GM12878 (cell line): ENCODE measurements at regions of chr4 and their contacts with region 1.

Region 1: GRCh38 chr4:112099701-112100297 is 45.5 kb upstream of the FAM241A start:
- DNase-seq: peak; percentile 27
- ATAC-seq: peak; percentile 93
- H3K4me3 ChIP-seq: no peak overlapping the region
- H3K27ac ChIP-seq: no peak overlapping the region
- H3K4me1 ChIP-seq: no peaks in the 10 kb centered on the region
- H3K27me3 ChIP-seq: no peaks in the 10 kb centered on the region
- CTCF ChIP-seq: peak; percentile 35 to 66 (median 50); a peak in 5 of 6 replicates
- EP300 ChIP-seq: no peak
- POLR2A ChIP-seq: no peak
- RAD21 ChIP-seq: peak; percentile 75

Region 2: GRCh38 chr4:112082954-112083586 is 16.7 kb before region 1 on chr4:
- CTCF ChIA-PET with region 1: interaction called, 6 read pairs
- POLR2A ChIA-PET with region 1: no interaction called
- RAD21 ChIA-PET with region 1: no interaction called
- SMC1A ChIA-PET with region 1: interaction called, 10 read pairs
- in situ Hi-C with region 1: no loop called
- intact Hi-C with region 1: no loop called
- DNase-seq: no peak
- ATAC-seq: no peak
- H3K4me3 ChIP-seq: no peak overlapping the region
- H3K27ac ChIP-seq: no peak overlapping the region
- H3K4me1 ChIP-seq: 0 out of 2 replicates have a peak, but pooled peaks cover 4% of the 10 kb centered on the region
- H3K27me3 ChIP-seq: no peaks in the 10 kb centered on the region
- CTCF ChIP-seq: no peak
- EP300 ChIP-seq: no peak
- POLR2A ChIP-seq: no peak
- RAD21 ChIP-seq: no peak

Region 3: DNA sequence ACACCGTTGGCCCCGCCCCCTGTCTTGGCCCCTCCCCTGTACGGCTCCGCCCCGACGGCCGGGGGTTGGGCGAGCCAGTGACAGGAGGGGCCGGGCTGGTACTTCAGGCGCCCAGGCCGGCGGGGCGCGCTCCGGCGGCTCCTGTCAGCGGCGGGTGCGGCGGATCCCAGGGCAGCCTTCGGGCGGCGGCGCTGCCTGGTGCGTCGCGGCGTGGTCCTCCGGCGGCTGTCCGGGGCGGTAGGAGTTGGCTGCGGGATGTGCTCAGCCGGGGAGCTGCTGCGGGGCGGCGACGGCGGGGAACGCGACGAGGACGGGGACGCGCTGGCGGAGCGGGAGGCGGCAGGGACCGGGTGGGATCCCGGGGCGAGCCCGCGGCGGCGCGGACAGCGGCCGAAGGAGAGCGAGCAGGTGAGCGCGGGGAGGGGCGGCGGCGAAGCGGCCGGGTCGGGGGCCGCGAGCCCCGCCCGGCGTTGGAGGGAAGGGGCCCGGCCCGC is 45.6 kb after region 1 on chr4 and contains the start of gene FAM241A:
- CTCF ChIA-PET with region 1: interaction called, 6 read pairs
- POLR2A ChIA-PET with region 1: interaction called, 3 read pairs
- RAD21 ChIA-PET with region 1: interaction called, 3 read pairs
- SMC1A ChIA-PET with region 1: interaction called, 11 read pairs
- in situ Hi-C with region 1: no loop called
- intact Hi-C with region 1: loop called (anchors 5 kb)
- DNase-seq: no peak
- ATAC-seq: peak; percentile 97
- H3K4me3 ChIP-seq: peak within 1 kb of the TSS; percentile 76
- H3K27ac ChIP-seq: no peak within 1 kb of the TSS
- H3K4me1 ChIP-seq: peaks cover 5% of the 10 kb centered on the region; the same call in 1 of the 2 replicates
- H3K27me3 ChIP-seq: peaks cover 0 to 2% of the 10 kb centered on the region in 2 experiments; a peak in 2 of 4 replicates
- CTCF ChIP-seq: no peak
- EP300 ChIP-seq: no peak
- POLR2A ChIP-seq: peak; percentile 93
- RAD21 ChIP-seq: no peak
- polyA plus RNA-seq, gene FAM241A: 0.82 to 1.4 TPM

Region 4: GRCh38 chr4:112245383-112245782 is 145.6 kb after region 1 on chr4:
- CTCF ChIA-PET with region 1: interaction called, 42 read pairs
- POLR2A ChIA-PET with region 1: no interaction called
- RAD21 ChIA-PET with region 1: no interaction called
- SMC1A ChIA-PET with region 1: interaction called, 5 read pairs
- in situ Hi-C with region 1: no loop called
- intact Hi-C with region 1: no loop called
- DNase-seq: no peak
- ATAC-seq: no peak
- H3K4me3 ChIP-seq: no peak overlapping the region
- H3K27ac ChIP-seq: no peak overlapping the region
- H3K4me1 ChIP-seq: no peaks in the 10 kb centered on the region
- H3K27me3 ChIP-seq: no peaks in the 10 kb centered on the region
- CTCF ChIP-seq: no peak
- EP300 ChIP-seq: no peak
- POLR2A ChIP-seq: no peak
- RAD21 ChIP-seq: no peak

Region 5: DNA sequence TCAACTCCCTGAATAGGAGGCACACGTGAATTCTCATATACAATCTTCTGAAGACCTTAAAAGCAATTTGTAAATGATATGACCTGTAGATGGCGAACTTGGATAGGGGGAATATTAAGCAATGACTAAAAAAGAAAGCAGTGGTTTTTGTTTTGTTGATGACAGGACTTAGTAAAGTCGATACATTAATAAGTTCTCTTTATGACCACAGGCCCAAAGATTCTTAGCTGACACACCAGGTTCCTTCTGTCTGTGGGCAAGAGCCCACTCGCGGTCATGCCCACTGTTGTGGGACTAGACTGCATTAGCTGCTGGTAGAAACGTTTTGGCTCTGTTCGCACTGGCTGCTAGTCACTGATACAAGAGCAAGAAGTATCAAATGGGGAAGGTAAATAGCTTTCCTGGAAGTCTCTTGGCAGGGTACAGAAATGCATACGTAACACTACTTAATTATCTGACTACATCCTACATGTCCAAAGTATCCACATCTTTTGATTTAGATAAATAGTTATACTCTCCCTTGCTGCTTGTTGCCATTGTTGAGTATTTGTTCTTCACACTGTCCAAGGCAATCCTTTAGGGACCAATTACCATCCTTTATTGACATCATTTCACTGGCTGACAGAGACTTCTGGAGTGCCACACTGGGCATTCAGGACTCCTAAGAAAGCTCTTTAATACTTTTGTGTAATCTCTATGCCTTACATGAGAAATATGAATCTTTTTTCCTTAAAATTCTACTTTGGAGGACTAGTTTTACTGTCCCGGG is 228.3 kb after region 1 on chr4:
- CTCF ChIA-PET with region 1: interaction called, 43 read pairs
- POLR2A ChIA-PET with region 1: interaction called, 3 read pairs
- RAD21 ChIA-PET with region 1: interaction called, 17 read pairs
- SMC1A ChIA-PET with region 1: interaction called, 17 read pairs
- in situ Hi-C with region 1: loop called (anchors 10 kb)
- intact Hi-C with region 1: loop called (anchors 5 kb)
- DNase-seq: peak; percentile 73
- ATAC-seq: peak; percentile 92
- H3K4me3 ChIP-seq: no peak overlapping the region
- H3K27ac ChIP-seq: no peak overlapping the region
- H3K4me1 ChIP-seq: peaks cover 4% of the 10 kb centered on the region
- H3K27me3 ChIP-seq: no peaks in the 10 kb centered on the region
- CTCF ChIP-seq: peak; percentile 51 to 78 (median 52); a peak in 5 of 6 replicates
- EP300 ChIP-seq: 0 out of 4 replicates have a peak, but pooled peaks of 1 of the 2 experiments have one; percentile 17
- POLR2A ChIP-seq: no peak
- RAD21 ChIP-seq: peak; percentile 90

Region 6: GRCh38 chr4:112523764-112524505 is 424.1 kb after region 1 on chr4:
- CTCF ChIA-PET with region 1: interaction called, 91 read pairs
- POLR2A ChIA-PET with region 1: no interaction called
- RAD21 ChIA-PET with region 1: interaction called, 23 read pairs
- SMC1A ChIA-PET with region 1: interaction called, 29 read pairs
- in situ Hi-C with region 1: loop called (anchors 5 kb)
- intact Hi-C with region 1: loop called (anchors 2 kb)
- DNase-seq: no peak
- ATAC-seq: peak; percentile 96
- H3K4me3 ChIP-seq: peak overlapping the region; percentile 73; the same call in 1 of the 2 replicates
- H3K27ac ChIP-seq: no peak overlapping the region
- H3K4me1 ChIP-seq: peaks cover 3% of the 10 kb centered on the region
- H3K27me3 ChIP-seq: no peaks in the 10 kb centered on the region; a peak in 2 of 4 replicates
- CTCF ChIP-seq: peak; percentile 88 to 92 (median 90)
- EP300 ChIP-seq: no peak
- POLR2A ChIP-seq: no peak
- RAD21 ChIP-seq: peak; percentile 85